ENCODE measurements at regions of chr5 and their contacts with region 1.

Region 1: DNA sequence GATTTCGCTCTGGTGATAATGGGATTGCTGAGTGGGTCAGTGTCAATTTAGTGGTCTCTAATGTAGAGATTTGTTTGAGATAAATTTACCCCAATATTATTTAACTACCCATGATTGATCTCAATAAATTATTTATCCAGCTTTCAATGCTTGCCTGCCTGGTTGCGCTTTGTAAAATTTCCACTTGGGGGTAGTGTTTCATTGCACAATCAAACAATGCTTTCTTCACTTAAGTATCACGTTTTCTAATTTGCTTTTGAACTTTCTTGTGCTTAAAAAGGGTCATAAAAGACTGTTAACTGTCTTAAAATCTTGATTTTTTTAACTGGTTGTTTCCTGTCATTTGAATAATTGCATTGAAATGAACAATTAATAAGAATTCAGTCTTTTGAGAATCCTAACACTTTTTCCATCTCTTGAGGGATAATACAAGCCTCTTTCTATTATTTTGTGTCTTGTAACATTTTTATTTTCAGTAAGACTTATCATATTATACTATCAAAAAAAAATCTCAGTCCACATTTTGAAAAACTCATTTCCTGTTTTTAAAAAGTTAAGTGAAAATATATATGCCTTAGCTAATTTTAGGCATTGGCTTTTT is 18.7 kb downstream of the HSD17B4 start:
- DNase-seq: no peak
- CTCF ChIP-seq: peak; percentile 63

Region 2: GRCh38 chr5:119743927-119744326 is 273.0 kb after region 1 on chr5:
- in situ Hi-C with region 1: loop called (anchors 10 kb)
- DNase-seq: peak; percentile 57
- CTCF ChIP-seq: peak; percentile 78

Measured in GM13977 (cell line).